ENCODE measurements at regions of chr14 and their contacts with region 1.

Region 1: DNA sequence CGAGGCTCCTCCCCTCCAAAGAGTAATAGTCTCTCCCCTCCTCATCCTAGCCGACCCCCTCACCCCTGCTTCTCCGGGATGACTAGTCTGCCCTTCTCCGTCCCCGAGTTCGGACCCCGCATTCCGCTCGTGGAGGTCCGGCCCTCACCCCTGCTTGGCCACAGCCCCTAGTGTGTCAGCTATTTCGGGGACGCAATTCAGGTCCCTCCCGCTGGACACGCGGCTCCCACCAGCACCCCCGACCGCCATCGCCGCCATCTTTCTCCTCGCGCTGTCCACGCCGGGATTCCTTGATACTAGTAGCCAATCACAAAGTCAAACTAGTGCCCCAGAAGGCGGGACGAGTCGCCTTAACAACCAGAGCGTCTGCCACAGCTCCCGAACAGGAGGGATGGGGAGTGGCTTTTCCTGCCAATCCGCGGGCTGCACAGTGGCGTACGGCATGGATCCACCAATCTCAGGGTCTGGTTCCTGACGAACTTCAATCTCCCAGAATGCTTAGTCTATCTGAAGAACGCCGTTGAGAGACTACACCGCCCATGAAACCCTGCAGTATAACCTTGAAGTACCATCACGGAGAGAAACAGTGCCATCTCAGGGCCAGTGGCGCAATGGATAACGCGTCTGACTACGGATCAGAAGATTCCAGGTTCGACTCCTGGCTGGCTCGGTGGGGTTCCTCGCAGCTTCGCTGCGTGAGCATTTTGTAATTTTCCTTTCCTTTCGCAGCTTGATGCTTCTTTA is at the start of gene PRMT5:
- DNase-seq: peak; percentile 97
- H3K4me3 Mint-ChIP-seq: no peak within 1 kb of the TSS
- H3K27ac Mint-ChIP-seq: no peak within 1 kb of the TSS
- H3K4me1 Mint-ChIP-seq: peaks cover 21% of the 10 kb centered on the region
- H3K27me3 Mint-ChIP-seq: no peaks in the 10 kb centered on the region
- total RNA-seq, gene PRMT5: 46.3 to 49.8 TPM

Region 2: GRCh38 chr14:22766456-22767322 is 162.6 kb before region 1 on chr14 and contains the start of gene OXA1L:
- CTCF ChIA-PET with region 1: interaction called, 12 read pairs
- POLR2A ChIA-PET with region 1: interaction called, 4 read pairs
- DNase-seq: peak; percentile 97
- H3K4me3 Mint-ChIP-seq: peak within 1 kb of the TSS; percentile 93
- H3K27ac Mint-ChIP-seq: peak within 1 kb of the TSS; percentile 97
- H3K4me1 Mint-ChIP-seq: peaks cover 35% of the 10 kb centered on the region
- H3K27me3 Mint-ChIP-seq: no peaks in the 10 kb centered on the region
- total RNA-seq, gene OXA1L: 118 to 122 TPM

Region 3: DNA sequence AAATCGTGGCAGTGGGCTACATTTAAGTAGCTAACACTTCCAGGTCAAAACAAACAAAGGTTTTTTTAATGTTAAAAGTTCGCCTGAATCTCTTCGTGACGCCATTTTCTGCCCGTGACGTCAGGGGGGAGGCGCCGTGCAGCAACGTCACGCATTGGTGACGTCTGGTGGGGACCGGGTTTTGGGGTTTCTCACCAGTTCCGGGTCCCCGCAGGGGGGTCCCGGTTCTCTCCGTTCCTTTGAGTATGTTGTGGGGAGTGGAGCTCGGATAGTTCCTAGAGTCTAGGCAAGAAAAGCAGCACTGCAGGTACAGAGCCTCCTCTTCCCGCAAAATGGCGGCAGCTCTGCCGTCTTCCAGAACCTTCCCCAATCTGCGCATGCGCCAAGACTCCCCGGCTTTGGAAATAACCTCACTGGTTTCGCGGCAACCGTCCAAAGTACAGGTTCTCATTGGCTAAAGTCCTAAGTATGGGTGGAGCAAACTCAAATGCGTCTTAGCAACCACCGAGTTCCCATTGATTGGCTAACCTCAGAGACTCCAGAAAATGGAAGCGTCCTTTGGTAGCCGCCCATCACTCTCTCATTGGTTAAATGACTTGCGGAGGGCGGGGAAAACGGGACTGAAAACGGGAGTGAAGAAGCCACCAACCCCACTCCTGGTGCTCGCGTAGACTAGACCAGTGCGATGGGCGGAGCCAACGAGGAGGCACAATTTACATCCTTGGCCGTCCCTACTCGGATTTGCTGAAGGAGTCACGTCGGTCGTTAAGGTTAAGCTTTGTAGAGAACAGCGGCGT is 10.3 kb before region 1 on chr14 and contains the start of gene RBM23:
- CTCF ChIA-PET with region 1: interaction called, 49 read pairs
- POLR2A ChIA-PET with region 1: interaction called, 80 read pairs
- DNase-seq: peak; percentile 100
- H3K4me3 Mint-ChIP-seq: peak within 1 kb of the TSS; percentile 90
- H3K27ac Mint-ChIP-seq: peak within 1 kb of the TSS; percentile 98
- H3K4me1 Mint-ChIP-seq: peaks cover 42% of the 10 kb centered on the region
- H3K27me3 Mint-ChIP-seq: no peaks in the 10 kb centered on the region
- total RNA-seq, gene RBM23: 71.8 to 73.5 TPM

Region 4: GRCh38 chr14:22955702-22956569 is 26.7 kb after region 1 on chr14:
- CTCF ChIA-PET with region 1: interaction called, 25 read pairs
- POLR2A ChIA-PET with region 1: interaction called, 33 read pairs
- DNase-seq: no peak
- H3K4me3 Mint-ChIP-seq: peak overlapping the region; percentile 91
- H3K27ac Mint-ChIP-seq: peak overlapping the region; percentile 79
- H3K4me1 Mint-ChIP-seq: peaks cover 30% of the 10 kb centered on the region
- H3K27me3 Mint-ChIP-seq: peaks cover 3% of the 10 kb centered on the region

Region 5: GRCh38 chr14:23095196-23096108 is 166.2 kb after region 1 on chr14 and contains the start of gene C14orf119:
- CTCF ChIA-PET with region 1: interaction called, 4 read pairs
- POLR2A ChIA-PET with region 1: interaction called, 13 read pairs
- DNase-seq: peak; percentile 100
- H3K4me3 Mint-ChIP-seq: no peak within 1 kb of the TSS
- H3K27ac Mint-ChIP-seq: no peak within 1 kb of the TSS
- H3K4me1 Mint-ChIP-seq: peaks cover 36% of the 10 kb centered on the region
- H3K27me3 Mint-ChIP-seq: no peaks in the 10 kb centered on the region
- total RNA-seq, gene C14orf119: 49.2 to 55.5 TPM